ENCODE measurements at regions of chr11 and their contacts with region 1.

Region 1: GRCh38 chr11:10653926-10654810 is 39.4 kb downstream of the IRAG1 start:
- DNase-seq: peak in 3 of 7 donors; percentile 33 to 53 (median 51)
- H3K4me3 ChIP-seq: no peak overlapping the region
- H3K27ac ChIP-seq: peak overlapping the region in 3 of 5 donors; percentile 7 to 92 (median 51)
- H3K4me1 ChIP-seq: peaks cover 36 to 62% of the 10 kb centered on the region in 2 donors
- H3K27me3 ChIP-seq: no peaks in the 10 kb centered on the region
- CTCF ChIP-seq: peak; percentile 25 to 74 (median 62)
- POLR2A ChIP-seq: no peak

Region 2: DNA sequence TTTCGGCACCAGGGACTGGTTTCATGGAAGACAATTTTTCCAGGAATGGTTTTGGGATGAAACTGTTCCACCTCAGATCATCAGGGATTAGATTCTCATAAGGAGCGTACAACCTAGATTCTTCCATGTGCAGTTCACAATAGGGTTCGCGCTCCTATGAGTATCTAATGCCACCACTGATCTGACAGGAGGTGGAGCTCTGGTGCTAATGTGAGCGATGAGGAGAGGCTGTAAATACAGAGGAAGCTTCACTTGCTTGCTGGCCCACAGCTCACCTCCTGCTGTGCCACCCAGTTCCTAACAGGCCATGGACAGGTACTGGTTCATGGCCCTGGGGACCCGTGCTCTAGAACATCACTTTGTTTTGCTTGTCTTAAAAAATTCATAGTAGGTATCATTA is 240.9 kb before region 1 on chr11:
- intact Hi-C with region 1: loop called in 1 of 2 experiments (anchors 10 kb)
- DNase-seq: peak in 2 of 7 donors; percentile 39 to 70
- H3K4me3 ChIP-seq: no peak overlapping the region
- H3K27ac ChIP-seq: peak overlapping the region in 1 of 5 donors; percentile 77
- H3K4me1 ChIP-seq: peaks cover 0 to 11% of the 10 kb centered on the region in 2 donors
- H3K27me3 ChIP-seq: no peaks in the 10 kb centered on the region
- CTCF ChIP-seq: peak in 4 of 6 experiments; percentile 16 to 41 (median 30)
- POLR2A ChIP-seq: no peak

Region 3: DNA sequence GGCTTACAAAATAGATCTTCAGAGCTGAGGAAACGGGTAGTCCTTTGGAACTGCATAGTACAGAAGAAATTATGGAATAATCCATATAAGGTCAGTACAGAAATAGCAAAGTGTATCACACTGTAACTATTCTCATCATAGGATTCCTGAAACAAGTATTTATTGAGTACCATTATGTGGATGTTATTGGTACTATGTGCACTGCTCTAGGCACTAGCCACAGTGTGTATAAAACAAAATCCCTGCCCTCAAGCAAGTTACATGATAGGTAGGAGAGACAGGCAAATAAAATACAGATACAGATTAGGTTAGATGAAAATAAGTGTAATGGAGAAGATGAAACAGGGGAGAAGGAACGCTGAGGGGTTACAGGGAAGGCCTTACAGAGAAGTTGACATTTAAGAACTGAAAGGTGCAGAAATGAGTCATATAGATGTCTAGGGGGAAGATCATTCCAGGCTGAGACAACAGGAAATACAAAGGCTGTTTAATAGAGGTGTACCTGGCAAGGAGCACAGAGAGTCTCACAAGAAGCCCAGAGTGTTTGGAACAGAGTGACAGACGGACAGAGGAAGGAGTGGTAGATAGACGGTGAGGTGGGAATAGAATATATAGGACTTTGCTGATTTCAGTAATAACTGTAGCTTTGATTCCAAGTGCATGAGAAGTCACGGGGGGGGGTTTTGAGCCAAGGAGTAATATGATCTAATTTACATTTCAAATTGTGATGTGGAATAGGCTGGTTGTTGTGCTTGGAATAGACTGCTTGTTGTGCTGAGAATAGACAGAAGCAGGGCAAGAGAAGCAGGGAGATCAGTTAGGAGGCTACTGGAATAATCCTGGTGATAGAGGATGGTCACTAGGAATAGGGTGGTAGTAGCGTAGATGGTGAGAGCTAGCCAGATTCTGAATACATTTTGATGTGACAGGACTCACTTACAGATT is 126.9 kb before region 1 on chr11:
- intact Hi-C with region 1: loop called in 1 of 2 experiments (anchors 5 kb)
- DNase-seq: no peak
- H3K4me3 ChIP-seq: no peak overlapping the region
- H3K27ac ChIP-seq: peak overlapping the region in 2 of 5 donors; percentile 2 to 33
- H3K4me1 ChIP-seq: peaks cover 0 to 29% of the 10 kb centered on the region in 2 donors
- H3K27me3 ChIP-seq: no peaks in the 10 kb centered on the region
- CTCF ChIP-seq: no peak
- POLR2A ChIP-seq: no peak

Region 4: DNA sequence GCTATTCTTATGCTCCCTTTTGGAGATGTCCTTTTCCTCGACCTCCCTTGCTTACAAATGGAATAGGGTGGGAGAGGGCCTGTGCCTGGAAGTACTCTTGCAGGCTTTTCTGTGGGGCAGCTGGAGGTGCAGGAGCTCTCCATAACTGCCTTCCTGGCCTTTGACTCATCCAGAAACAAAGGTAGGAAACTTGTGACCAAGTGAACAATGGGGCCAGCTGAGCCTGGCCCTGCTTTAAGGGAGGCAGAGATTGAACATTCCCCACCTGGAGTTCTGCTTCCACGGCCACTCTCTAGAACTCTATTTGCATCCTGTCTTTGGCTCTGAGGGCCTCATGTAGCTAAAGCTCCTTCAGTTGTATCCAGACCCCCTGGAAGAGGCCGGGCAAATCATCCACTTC is 80.6 kb before region 1 on chr11:
- intact Hi-C with region 1: loop called in 1 of 2 experiments (anchors 10 kb)
- DNase-seq: no peak
- H3K4me3 ChIP-seq: no peak overlapping the region
- H3K27ac ChIP-seq: no peak overlapping the region
- H3K4me1 ChIP-seq: peaks cover 9 to 16% of the 10 kb centered on the region in 2 donors
- H3K27me3 ChIP-seq: no peaks in the 10 kb centered on the region
- CTCF ChIP-seq: no peak
- POLR2A ChIP-seq: no peak

Region 5: DNA sequence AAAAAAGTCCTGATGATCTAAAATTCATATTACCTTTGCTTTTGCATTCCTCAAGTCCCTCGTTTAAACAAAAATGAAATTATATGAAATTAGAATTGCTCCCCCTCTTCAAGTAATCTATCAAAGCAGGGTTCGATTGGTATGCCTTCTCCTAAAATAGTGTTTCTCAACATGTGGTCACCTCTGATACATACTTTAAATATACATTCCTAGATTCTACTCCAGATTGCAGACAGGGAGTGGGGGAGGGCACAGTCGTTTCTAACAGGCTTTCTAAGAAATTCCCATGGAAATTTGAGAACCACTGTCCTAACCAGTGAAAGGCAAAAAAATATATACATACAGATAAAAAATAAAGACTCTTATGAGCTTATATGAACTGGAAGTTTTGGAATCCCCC is 62.0 kb after region 1 on chr11:
- intact Hi-C with region 1: no loop called
- DNase-seq: no peak
- H3K4me3 ChIP-seq: no peak overlapping the region
- H3K27ac ChIP-seq: no peak overlapping the region
- H3K4me1 ChIP-seq: peaks cover 6 to 17% of the 10 kb centered on the region in 2 donors
- H3K27me3 ChIP-seq: no peaks in the 10 kb centered on the region
- CTCF ChIP-seq: no peak
- POLR2A ChIP-seq: no peak

Measured in adrenal gland (tissue), 19 donors.